CD8-positive, alpha-beta T cell (primary cell): ENCODE measurements at regions of chr18 and their contacts with region 1.

Region 1: GRCh38 chr18:63439334-63439733 is 17.1 kb upstream of the VPS4B start:
- DNase-seq: peak; percentile 3 to 75 (median 48)
- ATAC-seq: peak; percentile 84
- H3K4me3 ChIP-seq: no peak overlapping the region
- H3K4me3 Mint-ChIP-seq: no peak overlapping the region
- H3K27ac ChIP-seq: no peak overlapping the region
- H3K27ac Mint-ChIP-seq: no peak overlapping the region
- H3K4me1 ChIP-seq: no peaks in the 10 kb centered on the region
- H3K4me1 Mint-ChIP-seq: no peaks in the 10 kb centered on the region
- H3K27me3 ChIP-seq: no peaks in the 10 kb centered on the region
- H3K27me3 Mint-ChIP-seq: peaks cover 10% of the 10 kb centered on the region
- CTCF ChIP-seq: peak; percentile 94

Region 2: DNA sequence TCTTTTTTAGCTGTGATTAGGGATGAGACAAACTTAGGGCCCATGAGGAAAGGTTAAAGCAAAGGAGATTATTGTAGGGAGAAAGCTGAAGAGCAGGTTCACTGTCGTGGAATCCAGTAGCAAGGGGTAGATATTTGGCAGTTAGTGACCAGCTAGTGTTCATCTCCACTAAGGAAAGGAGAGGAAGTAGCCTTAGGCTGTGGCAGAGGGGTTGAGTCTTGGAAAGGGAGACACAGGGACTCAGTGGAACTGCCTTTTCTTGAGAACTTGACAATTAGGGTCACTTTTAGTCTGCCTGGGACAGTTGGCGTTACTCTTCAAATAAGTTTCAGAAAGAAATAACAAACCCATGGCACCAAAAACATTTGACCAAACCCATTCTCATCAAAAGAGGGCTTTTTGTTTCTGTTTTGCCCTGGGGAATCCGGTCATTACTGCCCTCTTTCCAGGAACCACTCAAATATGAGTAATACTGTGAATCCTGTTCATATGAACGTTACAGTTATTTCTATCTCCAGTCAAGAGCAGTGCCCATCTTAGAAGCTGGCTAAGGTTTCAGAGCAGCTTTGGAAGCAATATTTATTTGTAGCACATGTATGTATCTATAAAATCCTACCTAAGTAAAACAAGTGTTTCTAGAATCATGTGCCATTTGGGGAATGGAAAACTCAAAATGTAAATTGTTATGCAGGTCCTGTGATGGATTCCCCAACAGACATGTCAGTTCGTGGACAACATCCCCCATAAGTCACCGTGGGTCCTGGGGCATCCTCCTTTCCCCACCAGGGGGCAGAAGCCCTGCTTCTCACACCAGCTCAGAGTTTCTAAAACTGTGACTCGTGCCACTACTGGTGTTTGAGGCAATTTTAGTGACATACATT is 801.3 kb before region 1 on chr18:
- CTCF ChIA-PET with region 1: no interaction called
- POLR2A ChIA-PET with region 1: no interaction called
- intact Hi-C with region 1: loop called in 1 of 2 experiments (anchors 5 kb)
- DNase-seq: peak; percentile 8 to 64 (median 50)
- ATAC-seq: peak; percentile 68
- H3K4me3 ChIP-seq: no peak overlapping the region
- H3K4me3 Mint-ChIP-seq: no peak overlapping the region
- H3K27ac ChIP-seq: no peak overlapping the region
- H3K27ac Mint-ChIP-seq: no peak overlapping the region
- H3K4me1 ChIP-seq: no peaks in the 10 kb centered on the region
- H3K4me1 Mint-ChIP-seq: no peaks in the 10 kb centered on the region
- H3K27me3 ChIP-seq: peaks cover 0 to 2% of the 10 kb centered on the region in 2 experiments
- H3K27me3 Mint-ChIP-seq: peaks cover 22% of the 10 kb centered on the region
- CTCF ChIP-seq: peak; percentile 44

Region 3: GRCh38 chr18:63131106-63131958 is 308.0 kb before region 1 on chr18:
- CTCF ChIA-PET with region 1: interaction called, 22 read pairs
- POLR2A ChIA-PET with region 1: no interaction called
- intact Hi-C with region 1: loop called (anchors 1 kb)
- DNase-seq: peak; percentile 32 to 78 (median 63)
- ATAC-seq: peak; percentile 76
- H3K4me3 ChIP-seq: no peak overlapping the region
- H3K4me3 Mint-ChIP-seq: no peak overlapping the region
- H3K27ac ChIP-seq: no peak overlapping the region
- H3K27ac Mint-ChIP-seq: peak overlapping the region; percentile 77
- H3K4me1 ChIP-seq: peaks cover 31% of the 10 kb centered on the region
- H3K4me1 Mint-ChIP-seq: peaks cover 30% of the 10 kb centered on the region
- H3K27me3 ChIP-seq: no peaks in the 10 kb centered on the region
- H3K27me3 Mint-ChIP-seq: no peaks in the 10 kb centered on the region
- CTCF ChIP-seq: peak; percentile 71

Region 4: DNA sequence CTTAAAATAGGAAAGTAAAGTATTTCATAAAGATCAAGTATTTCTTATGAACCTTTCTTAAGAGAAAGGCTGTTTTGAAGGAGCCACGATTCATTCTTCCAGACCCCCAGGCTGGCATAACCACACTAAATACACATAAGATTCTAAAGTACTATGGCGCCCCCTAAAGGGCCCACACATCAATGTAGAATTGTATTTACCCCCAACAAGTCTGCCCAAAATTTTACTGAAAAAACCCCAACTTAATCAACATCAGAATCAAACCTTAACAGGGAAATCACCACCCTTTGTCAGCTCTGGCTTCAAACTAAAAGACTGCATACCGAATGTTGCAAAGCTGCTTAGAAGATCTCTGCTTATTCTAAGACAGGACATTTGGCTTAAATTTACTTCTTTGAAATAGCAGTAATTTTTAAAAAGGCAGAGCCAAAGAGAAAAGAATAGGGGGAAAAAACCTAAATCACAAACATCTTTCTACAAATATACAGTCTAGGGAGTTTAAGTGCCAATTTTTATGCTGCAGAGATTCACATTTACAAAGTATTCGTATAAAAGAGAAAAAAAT is 99.3 kb before region 1 on chr18:
- CTCF ChIA-PET with region 1: interaction called, 52 read pairs
- POLR2A ChIA-PET with region 1: no interaction called
- intact Hi-C with region 1: loop called in 1 of 2 experiments (anchors 1 kb)
- DNase-seq: peak in 8 of 9 experiments; percentile 10 to 75 (median 45)
- ATAC-seq: peak; percentile 67
- H3K4me3 ChIP-seq: no peak overlapping the region
- H3K4me3 Mint-ChIP-seq: no peak overlapping the region
- H3K27ac ChIP-seq: no peak overlapping the region
- H3K27ac Mint-ChIP-seq: no peak overlapping the region
- H3K4me1 ChIP-seq: no peaks in the 10 kb centered on the region
- H3K4me1 Mint-ChIP-seq: peaks cover 4% of the 10 kb centered on the region
- H3K27me3 ChIP-seq: no peaks in the 10 kb centered on the region
- H3K27me3 Mint-ChIP-seq: no peaks in the 10 kb centered on the region
- CTCF ChIP-seq: peak; percentile 75

Region 5: DNA sequence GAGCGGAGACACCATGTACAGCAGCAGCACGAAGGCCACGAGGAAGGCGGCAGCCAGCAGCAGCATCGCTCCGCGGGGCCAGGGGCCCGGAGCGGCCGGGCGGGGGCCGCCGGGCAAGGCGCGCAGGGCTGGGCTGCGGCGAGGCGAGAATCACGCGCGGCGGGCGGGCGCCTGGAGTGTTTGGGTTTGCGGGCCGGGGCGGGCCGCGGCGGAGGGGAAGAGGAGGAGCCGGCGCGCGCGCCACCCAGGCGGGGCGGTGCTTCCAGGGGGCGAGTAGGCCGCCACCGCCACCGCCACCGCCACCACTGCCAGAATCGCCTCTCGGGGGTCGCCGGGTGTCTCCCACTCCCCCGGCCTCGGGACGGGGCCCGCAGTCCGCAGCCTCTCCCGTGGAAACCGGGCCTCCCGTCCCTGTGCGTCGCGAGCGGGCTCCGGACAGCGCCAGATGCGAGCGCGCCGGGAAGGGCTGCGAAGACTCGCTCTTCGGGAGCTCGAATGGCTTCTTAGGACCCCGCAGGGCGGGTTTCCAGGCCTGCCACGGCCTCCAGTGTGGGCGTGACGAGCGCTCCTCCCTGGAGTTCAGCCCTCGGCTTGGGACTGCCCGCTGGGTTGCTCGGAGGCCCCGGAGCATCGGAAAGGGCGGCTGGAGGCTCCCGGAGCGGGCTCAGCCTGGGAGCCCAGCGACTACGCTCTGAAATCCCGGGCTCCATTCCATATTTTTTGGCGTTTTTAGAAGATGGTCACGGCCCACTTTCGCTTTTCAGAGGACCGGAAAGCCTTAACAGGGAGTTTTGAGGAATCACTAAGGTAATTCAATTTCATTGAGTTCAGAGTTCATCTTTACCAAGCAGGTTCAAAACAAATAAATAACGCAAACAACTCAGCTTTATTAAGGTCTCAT is 72.0 kb before region 1 on chr18 and contains the start of gene KDSR:
- CTCF ChIA-PET with region 1: interaction called, 17 read pairs
- POLR2A ChIA-PET with region 1: interaction called, 7 read pairs
- intact Hi-C with region 1: no loop called
- DNase-seq: peak; percentile 58 to 87 (median 78)
- ATAC-seq: peak; percentile 82
- H3K4me3 ChIP-seq: peak within 1 kb of the TSS; percentile 87 to 89
- H3K4me3 Mint-ChIP-seq: peak within 1 kb of the TSS; percentile 89
- H3K27ac ChIP-seq: peak within 1 kb of the TSS; percentile 63 to 65
- H3K27ac Mint-ChIP-seq: peak within 1 kb of the TSS; percentile 86
- H3K4me1 ChIP-seq: peaks cover 33% of the 10 kb centered on the region
- H3K4me1 Mint-ChIP-seq: peaks cover 45% of the 10 kb centered on the region
- H3K27me3 ChIP-seq: no peaks in the 10 kb centered on the region
- H3K27me3 Mint-ChIP-seq: no peaks in the 10 kb centered on the region
- CTCF ChIP-seq: no peak
- total RNA-seq, gene KDSR: 12.8 to 13.9 TPM